Heart right ventricle (tissue), 16 donors: ENCODE measurements at regions of chr11 and their contacts with region 1.

Region 1: GRCh38 chr11:87493516-87493915 is 455.8 kb downstream of the TMEM135 start:
- DNase-seq: no peak
- ATAC-seq: no peak
- H3K4me3 ChIP-seq: no peak overlapping the region
- H3K27ac ChIP-seq: no peak overlapping the region
- H3K4me1 ChIP-seq: no peaks in the 10 kb centered on the region
- H3K27me3 ChIP-seq: no peaks in the 10 kb centered on the region
- CTCF ChIP-seq: no peak

Region 2: DNA sequence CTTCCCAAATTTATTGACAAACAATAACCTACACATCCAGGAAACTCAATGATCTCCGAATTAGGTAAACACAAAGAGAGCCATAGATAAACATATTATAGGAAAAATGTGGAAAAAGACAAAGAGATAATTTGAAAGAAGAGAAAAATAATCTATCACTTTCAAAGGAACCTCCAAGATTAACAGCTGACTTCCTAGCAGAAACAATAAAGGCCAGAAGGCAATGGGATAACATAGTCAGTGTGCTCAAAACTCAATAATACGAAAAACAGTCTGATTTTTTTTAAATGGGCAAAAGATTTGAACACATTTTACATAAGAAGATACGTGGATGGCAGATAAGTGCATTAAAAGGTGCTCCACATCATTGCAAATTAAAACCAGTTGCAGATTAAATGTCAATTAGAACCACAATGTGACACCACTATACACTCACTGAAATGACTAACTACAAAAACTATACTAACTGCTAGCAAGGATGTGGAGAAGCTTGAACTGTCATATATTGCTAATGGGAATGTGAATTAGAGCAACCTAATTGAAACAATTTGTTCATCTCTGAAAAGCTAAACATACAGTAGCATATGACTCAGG is 155.4 kb before region 1 on chr11:
- intact Hi-C with region 1: no loop called
- DNase-seq: no peak
- ATAC-seq: no peak
- H3K4me3 ChIP-seq: no peak overlapping the region
- H3K27ac ChIP-seq: no peak overlapping the region
- H3K4me1 ChIP-seq: no peaks in the 10 kb centered on the region
- H3K27me3 ChIP-seq: no peaks in the 10 kb centered on the region
- CTCF ChIP-seq: no peak

Region 3: GRCh38 chr11:87583931-87584330 is 90.4 kb after region 1 on chr11:
- intact Hi-C with region 1: no loop called
- DNase-seq: no peak
- ATAC-seq: no peak
- H3K4me3 ChIP-seq: no peak overlapping the region
- H3K27ac ChIP-seq: no peak overlapping the region
- H3K4me1 ChIP-seq: no peaks in the 10 kb centered on the region
- H3K27me3 ChIP-seq: no peaks in the 10 kb centered on the region
- CTCF ChIP-seq: no peak

Region 4: GRCh38 chr11:87901341-87901740 is 407.8 kb after region 1 on chr11:
- intact Hi-C with region 1: no loop called
- DNase-seq: no peak
- ATAC-seq: no peak
- H3K4me3 ChIP-seq: no peak overlapping the region
- H3K27ac ChIP-seq: no peak overlapping the region
- H3K4me1 ChIP-seq: no peaks in the 10 kb centered on the region
- H3K27me3 ChIP-seq: no peaks in the 10 kb centered on the region
- CTCF ChIP-seq: no peak

Region 5: GRCh38 chr11:88552377-88553062 is 1059.0 kb after region 1 on chr11:
- intact Hi-C with region 1: loop called in 1 of 10 experiments (anchors 10 kb)
- DNase-seq: peak in 1 of 2 donors; percentile 14
- ATAC-seq: no peak
- H3K4me3 ChIP-seq: no peak overlapping the region
- H3K27ac ChIP-seq: no peak overlapping the region
- H3K4me1 ChIP-seq: no peaks in the 10 kb centered on the region
- H3K27me3 ChIP-seq: peaks cover 0 to 8% (median 0%) of the 10 kb centered on the region in 7 donors
- CTCF ChIP-seq: peak in 8 of 9 donors; percentile 8 to 66 (median 43)